ENCODE measurements at regions of chr5 and their contacts with region 1.

Region 1: DNA sequence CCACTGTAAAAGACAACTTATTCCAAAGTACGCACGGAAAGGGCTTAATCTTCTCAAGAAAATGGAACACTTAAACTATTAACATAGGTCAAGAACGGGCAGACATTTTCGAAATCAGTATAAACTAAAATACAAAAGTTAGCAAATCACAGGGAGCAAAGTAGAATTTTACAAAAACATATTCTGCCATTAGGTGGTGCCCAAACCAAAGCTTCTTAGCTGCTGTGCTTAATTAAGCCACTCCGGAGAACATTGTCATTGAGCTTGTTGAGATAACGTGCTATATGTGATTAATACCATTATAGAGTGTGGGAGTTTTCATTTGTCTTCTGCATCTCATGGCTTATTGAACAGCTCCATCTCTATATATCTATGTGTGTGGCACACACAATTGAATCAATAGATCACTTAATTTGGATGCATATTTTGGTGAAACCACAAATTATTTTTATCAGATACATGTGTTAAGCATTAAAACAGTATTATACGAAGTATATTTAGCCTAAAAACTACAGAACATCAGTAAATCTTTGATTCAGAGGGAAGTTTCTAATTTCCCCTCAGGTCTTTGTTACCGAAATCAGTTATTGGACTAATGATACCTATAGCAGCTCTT is 23.4 kb downstream of the UBLCP1 start:
- DNase-seq: peak; percentile 48
- ATAC-seq: peak; percentile 53; the same call in 1 of the 2 replicates
- H3K4me3 ChIP-seq: no peak overlapping the region
- H3K27ac ChIP-seq: no peak overlapping the region
- H3K4me1 ChIP-seq: no peaks in the 10 kb centered on the region
- H3K27me3 ChIP-seq: no peaks in the 10 kb centered on the region
- CTCF ChIP-seq: peak; percentile 56
- POLR2A ChIP-seq: no peak
- RAD21 ChIP-seq: peak; percentile 77

Region 2: DNA sequence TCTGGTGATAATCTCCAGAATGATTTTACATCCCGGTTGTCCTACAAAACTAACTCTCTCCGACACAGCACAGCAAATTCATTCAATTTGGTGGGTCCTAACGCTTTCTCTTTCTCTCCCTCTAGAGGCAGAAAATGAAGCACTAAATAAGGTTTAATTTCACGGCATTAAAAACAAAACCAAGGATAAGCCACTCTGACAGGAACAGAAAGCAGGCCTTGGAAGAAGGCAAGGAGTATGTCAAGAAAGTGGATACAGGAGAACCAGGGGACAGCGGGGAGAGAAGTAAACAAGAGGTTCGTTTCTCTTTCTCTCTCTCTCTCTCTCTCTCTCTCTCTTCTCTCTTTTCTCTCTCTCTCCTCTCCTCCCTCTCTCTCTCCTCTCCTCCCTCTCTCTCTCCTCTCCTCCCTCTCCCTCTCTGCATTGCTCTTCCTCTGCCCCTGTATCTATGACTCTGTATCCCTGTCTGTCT is 236.6 kb before region 1 on chr5:
- CTCF ChIA-PET with region 1: no interaction called
- POLR2A ChIA-PET with region 1: no interaction called
- dilution Hi-C with region 1: no loop called
- in situ Hi-C with region 1: no loop called
- intact Hi-C with region 1: no loop called
- DNase-seq: peak; percentile 57
- ATAC-seq: peak; percentile 81
- H3K4me3 ChIP-seq: no peak overlapping the region
- H3K27ac ChIP-seq: peak overlapping the region; percentile 2; the same call in 1 of the 2 replicates
- H3K4me1 ChIP-seq: peaks cover 4% of the 10 kb centered on the region
- H3K27me3 ChIP-seq: no peaks in the 10 kb centered on the region
- CTCF ChIP-seq: peak; percentile 49
- POLR2A ChIP-seq: no peak
- RAD21 ChIP-seq: peak; percentile 44

Region 3: GRCh38 chr5:159427180-159428012 is 140.9 kb after region 1 on chr5:
- CTCF ChIA-PET with region 1: no interaction called
- POLR2A ChIA-PET with region 1: no interaction called
- dilution Hi-C with region 1: no loop called
- in situ Hi-C with region 1: no loop called
- intact Hi-C with region 1: loop called (anchors 5 kb)
- DNase-seq: no peak
- ATAC-seq: no peak
- H3K4me3 ChIP-seq: no peak overlapping the region
- H3K27ac ChIP-seq: no peak overlapping the region
- H3K4me1 ChIP-seq: no peaks in the 10 kb centered on the region
- H3K27me3 ChIP-seq: peaks cover 23% of the 10 kb centered on the region
- CTCF ChIP-seq: no peak
- POLR2A ChIP-seq: no peak
- RAD21 ChIP-seq: no peak

Measured in IMR-90 (cell line).